BJ (cell line): ENCODE measurements at regions of chr9 and their contacts with region 1.

Region 1: DNA sequence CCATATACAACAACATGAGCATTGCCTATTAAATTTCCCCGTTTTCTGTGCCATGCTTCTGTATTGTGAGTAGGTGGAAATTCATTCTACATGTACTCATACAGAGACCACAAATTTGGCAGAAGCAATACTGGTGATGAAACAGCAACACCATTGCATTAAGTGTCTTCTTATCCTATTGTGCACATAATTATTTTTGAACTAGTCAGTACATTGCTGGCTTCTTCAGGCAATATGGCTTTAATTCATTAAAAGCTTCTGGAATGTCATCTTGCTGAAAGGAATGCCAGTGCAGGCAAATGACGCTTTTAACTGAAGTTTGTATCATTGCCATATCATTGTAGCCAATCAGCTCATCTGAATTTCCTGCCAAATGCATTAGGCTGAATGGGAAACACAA is 82.6 kb downstream of the KIAA1958 start:
- DNase-seq: peak; percentile 98
- H3K4me3 ChIP-seq: no peak overlapping the region
- H3K27me3 ChIP-seq: no peaks in the 10 kb centered on the region
- CTCF ChIP-seq: no peak

Region 2: DNA sequence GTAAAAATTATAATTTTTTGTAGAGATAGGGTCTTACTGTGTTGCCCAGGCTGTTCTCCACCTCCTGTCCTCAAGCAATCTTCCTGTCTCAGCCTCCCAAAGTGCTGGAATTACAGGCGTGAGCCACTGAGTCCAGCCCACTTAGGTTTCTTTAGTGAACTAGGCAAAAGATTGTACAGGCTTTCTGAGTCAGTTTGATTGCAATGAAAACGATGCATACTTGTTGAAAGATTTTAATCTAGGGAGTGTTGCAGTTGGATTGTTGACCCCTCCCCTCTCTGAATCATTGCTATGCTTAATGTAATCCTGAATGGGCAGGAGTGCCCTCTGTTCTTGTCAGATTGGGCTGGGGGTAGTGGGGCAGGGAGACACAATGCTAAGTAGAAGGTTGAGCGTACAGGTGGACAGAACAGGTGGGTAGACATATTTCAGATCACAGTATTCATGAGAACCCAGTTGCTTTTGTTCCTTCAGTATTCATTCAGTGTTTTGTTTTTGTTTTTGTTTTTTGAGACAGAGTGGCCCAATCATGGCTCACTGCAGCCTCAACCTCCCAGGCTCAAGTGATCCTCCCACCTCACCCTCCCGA is 12.6 kb before region 1 on chr9:
- CTCF ChIA-PET with region 1: interaction called, 4 read pairs
- POLR2A ChIA-PET with region 1: interaction called, 21 read pairs
- DNase-seq: peak; percentile 66
- H3K4me3 ChIP-seq: no peak overlapping the region
- H3K27me3 ChIP-seq: no peaks in the 10 kb centered on the region
- CTCF ChIP-seq: no peak

Region 3: GRCh38 chr9:112642126-112642525 is 72.9 kb after region 1 on chr9:
- CTCF ChIA-PET with region 1: no interaction called
- POLR2A ChIA-PET with region 1: no interaction called
- DNase-seq: no peak
- H3K4me3 ChIP-seq: no peak overlapping the region
- H3K27me3 ChIP-seq: no peaks in the 10 kb centered on the region
- CTCF ChIP-seq: no peak